ENCODE measurements at regions of chr13 and their contacts with region 1.

Region 1: GRCh38 chr13:27362064-27362883 is 62.1 kb upstream of the GTF3A start:
- DNase-seq: peak; percentile 85 to 96 (median 94)
- ATAC-seq: peak; percentile 95 to 97
- H3K4me3 ChIP-seq: peak overlapping the region; percentile 26
- H3K27ac ChIP-seq: no peak overlapping the region
- H3K4me1 ChIP-seq: no peaks in the 10 kb centered on the region
- H3K27me3 ChIP-seq: no peaks in the 10 kb centered on the region

Region 2: DNA sequence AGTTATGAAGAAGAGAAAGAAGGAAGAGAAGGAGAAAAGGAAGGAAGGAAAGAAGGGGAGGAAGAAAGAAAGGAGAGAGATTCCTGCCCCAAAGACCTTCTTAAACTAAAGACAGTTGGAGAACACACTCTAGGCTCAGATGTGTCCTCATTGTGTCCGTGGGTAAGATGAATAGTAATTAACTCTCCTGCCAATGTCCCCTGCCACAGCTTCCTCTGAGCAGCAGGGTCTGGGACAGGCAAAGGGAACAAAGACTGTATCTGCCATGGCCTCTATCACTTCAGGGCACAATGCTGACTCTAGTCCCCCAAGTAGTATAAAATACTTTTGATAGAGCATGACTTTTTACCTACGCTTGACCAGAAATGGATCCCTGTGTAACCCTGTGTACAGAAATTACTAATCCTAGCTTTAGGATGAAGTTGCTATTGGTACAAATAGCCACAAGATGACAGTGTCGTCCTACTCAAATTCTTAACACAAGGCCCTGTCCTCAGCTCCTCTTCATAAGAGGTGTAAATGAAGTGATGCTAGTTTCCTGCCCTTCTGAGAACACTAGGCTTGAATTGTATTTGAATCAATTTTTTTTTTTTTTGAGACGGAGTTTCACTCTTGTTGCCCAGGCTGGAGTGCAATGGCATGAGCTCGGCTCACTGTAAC is 415.5 kb before region 1 on chr13:
- intact Hi-C with region 1: loop called (anchors 2 to 10 kb)
- DNase-seq: no peak
- ATAC-seq: peak; percentile 68 to 82
- H3K4me3 ChIP-seq: no peak overlapping the region
- H3K27ac ChIP-seq: no peak overlapping the region
- H3K4me1 ChIP-seq: no peaks in the 10 kb centered on the region
- H3K27me3 ChIP-seq: no peaks in the 10 kb centered on the region

Region 3: GRCh38 chr13:27182844-27183497 is 179.3 kb before region 1 on chr13:
- intact Hi-C with region 1: loop called in 1 of 4 experiments (anchors 10 kb)
- DNase-seq: peak; percentile 76 to 84 (median 78)
- ATAC-seq: peak; percentile 95 to 99
- H3K4me3 ChIP-seq: no peak overlapping the region
- H3K27ac ChIP-seq: peak overlapping the region; percentile 8
- H3K4me1 ChIP-seq: peaks cover 7% of the 10 kb centered on the region
- H3K27me3 ChIP-seq: no peaks in the 10 kb centered on the region

Region 4: GRCh38 chr13:27826379-27827353 is 464.4 kb after region 1 on chr13:
- intact Hi-C with region 1: loop called in 1 of 4 experiments (anchors 5 kb)
- DNase-seq: peak; percentile 73 to 90 (median 86)
- ATAC-seq: peak; percentile 92 to 95
- H3K4me3 ChIP-seq: no peak overlapping the region
- H3K27ac ChIP-seq: no peak overlapping the region
- H3K4me1 ChIP-seq: no peaks in the 10 kb centered on the region
- H3K27me3 ChIP-seq: peaks cover 2% of the 10 kb centered on the region

Region 5: DNA sequence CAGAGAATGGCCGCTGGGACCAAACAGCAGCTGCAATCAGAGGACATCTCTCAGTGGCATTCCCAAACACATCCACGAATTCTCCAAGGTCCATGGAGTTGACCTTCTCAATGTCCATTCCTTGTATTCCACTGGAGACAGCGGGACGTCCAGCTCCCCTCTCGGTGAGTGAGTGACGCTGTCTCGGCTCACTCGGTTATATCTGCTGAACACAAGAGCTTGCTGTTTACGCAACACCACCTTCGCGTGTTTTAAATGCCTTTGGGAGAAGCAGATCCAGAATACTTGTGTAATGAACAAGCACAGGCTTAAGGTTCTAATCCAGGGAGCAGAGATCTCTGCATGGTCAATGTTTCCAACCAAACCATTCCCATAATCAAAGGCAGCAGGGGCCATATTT is 626.2 kb after region 1 on chr13 and contains the start of gene URAD:
- intact Hi-C with region 1: loop called (anchors 5 to 10 kb)
- DNase-seq: no peak
- ATAC-seq: no peak
- H3K4me3 ChIP-seq: no peak within 1 kb of the TSS
- H3K27ac ChIP-seq: no peak within 1 kb of the TSS
- H3K4me1 ChIP-seq: no peaks in the 10 kb centered on the region
- H3K27me3 ChIP-seq: peaks cover 2% of the 10 kb centered on the region
- total RNA-seq, gene URAD: not detected